IMR-90 (cell line): ENCODE measurements at regions of chrX and their contacts with region 1.

Region 1: DNA sequence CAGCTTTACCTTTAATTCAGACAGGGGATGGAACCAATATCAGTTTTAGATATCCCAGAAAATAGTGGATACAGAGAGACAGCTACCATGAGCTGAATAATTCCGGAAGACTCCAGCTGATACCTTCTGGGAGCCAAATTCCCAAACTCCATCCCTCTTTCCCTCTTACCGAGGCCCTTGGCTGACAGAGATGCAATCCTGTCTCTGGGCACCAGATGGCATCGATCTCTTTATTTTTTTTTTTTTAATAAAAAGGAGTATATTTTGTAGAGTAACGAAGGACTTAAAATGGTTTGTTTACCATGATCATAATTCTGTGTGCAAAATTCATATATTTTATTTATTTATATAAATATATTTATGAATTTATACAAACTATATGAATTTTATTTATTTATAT is 31.0 kb downstream of the RAB40A start:
- DNase-seq: no peak
- ATAC-seq: no peak
- H3K4me3 ChIP-seq: no peak overlapping the region
- H3K27ac ChIP-seq: no peak overlapping the region
- H3K4me1 ChIP-seq: no peaks in the 10 kb centered on the region
- H3K27me3 ChIP-seq: no peaks in the 10 kb centered on the region
- CTCF ChIP-seq: peak; percentile 41
- POLR2A ChIP-seq: no peak
- RAD21 ChIP-seq: no peak; the same call in 1 of the 2 replicates

Region 2: GRCh38 chrX:103214870-103215424 is 273.4 kb before region 1 on chrX and contains the start of gene BEX4:
- CTCF ChIA-PET with region 1: interaction called, 4 read pairs
- POLR2A ChIA-PET with region 1: no interaction called
- dilution Hi-C with region 1: no loop called
- in situ Hi-C with region 1: no loop called
- intact Hi-C with region 1: loop called (anchors 1 kb)
- DNase-seq: peak; percentile 41
- ATAC-seq: peak; percentile 84
- H3K4me3 ChIP-seq: peak within 1 kb of the TSS; percentile 61
- H3K27ac ChIP-seq: no peak within 1 kb of the TSS
- H3K4me1 ChIP-seq: no peaks in the 10 kb centered on the region
- H3K27me3 ChIP-seq: peaks cover 9% of the 10 kb centered on the region
- CTCF ChIP-seq: no peak
- POLR2A ChIP-seq: no peak
- RAD21 ChIP-seq: no peak
- total RNA-seq, gene BEX4: 0.54 and 3.3 TPM in 2 replicates

Region 3: DNA sequence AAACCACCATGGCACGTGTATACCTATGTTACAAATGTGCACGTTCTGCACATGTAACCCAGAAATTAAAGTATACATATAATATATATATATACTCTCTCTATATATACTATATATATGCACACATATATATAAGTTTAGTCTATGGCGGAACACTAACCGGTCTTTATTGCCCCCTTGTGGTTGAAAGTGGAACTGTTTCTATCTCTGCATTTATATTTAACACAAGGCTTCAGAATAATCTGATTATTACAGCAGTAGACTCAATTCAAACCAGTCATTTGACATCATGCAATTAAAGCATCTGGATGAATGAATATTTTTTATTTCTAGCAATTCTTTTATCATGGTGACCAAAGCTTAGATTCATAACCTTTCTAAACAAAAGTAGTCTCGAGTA is 329.2 kb after region 1 on chrX:
- CTCF ChIA-PET with region 1: no interaction called
- POLR2A ChIA-PET with region 1: no interaction called
- dilution Hi-C with region 1: no loop called
- in situ Hi-C with region 1: no loop called
- intact Hi-C with region 1: loop called (anchors 5 kb)
- DNase-seq: peak; percentile 42
- ATAC-seq: peak; percentile 79
- H3K4me3 ChIP-seq: no peak overlapping the region
- H3K27ac ChIP-seq: no peak overlapping the region
- H3K4me1 ChIP-seq: no peaks in the 10 kb centered on the region
- H3K27me3 ChIP-seq: peaks cover 1% of the 10 kb centered on the region; the same call in 1 of the 2 replicates
- CTCF ChIP-seq: peak; percentile 62
- POLR2A ChIP-seq: no peak
- RAD21 ChIP-seq: peak; percentile 61

Region 4: GRCh38 chrX:104695593-104695992 is 1207.3 kb after region 1 on chrX:
- CTCF ChIA-PET with region 1: no interaction called
- POLR2A ChIA-PET with region 1: no interaction called
- dilution Hi-C with region 1: no loop called
- in situ Hi-C with region 1: no loop called
- intact Hi-C with region 1: no loop called
- DNase-seq: no peak
- ATAC-seq: no peak
- H3K4me3 ChIP-seq: no peak overlapping the region
- H3K27ac ChIP-seq: no peak overlapping the region
- H3K4me1 ChIP-seq: no peaks in the 10 kb centered on the region
- H3K27me3 ChIP-seq: no peaks in the 10 kb centered on the region; the same call in 1 of the 2 replicates
- CTCF ChIP-seq: no peak
- POLR2A ChIP-seq: no peak
- RAD21 ChIP-seq: no peak